AG04450 (cell line): ENCODE measurements at regions of chr4 and their contacts with region 1.

Region 1: DNA sequence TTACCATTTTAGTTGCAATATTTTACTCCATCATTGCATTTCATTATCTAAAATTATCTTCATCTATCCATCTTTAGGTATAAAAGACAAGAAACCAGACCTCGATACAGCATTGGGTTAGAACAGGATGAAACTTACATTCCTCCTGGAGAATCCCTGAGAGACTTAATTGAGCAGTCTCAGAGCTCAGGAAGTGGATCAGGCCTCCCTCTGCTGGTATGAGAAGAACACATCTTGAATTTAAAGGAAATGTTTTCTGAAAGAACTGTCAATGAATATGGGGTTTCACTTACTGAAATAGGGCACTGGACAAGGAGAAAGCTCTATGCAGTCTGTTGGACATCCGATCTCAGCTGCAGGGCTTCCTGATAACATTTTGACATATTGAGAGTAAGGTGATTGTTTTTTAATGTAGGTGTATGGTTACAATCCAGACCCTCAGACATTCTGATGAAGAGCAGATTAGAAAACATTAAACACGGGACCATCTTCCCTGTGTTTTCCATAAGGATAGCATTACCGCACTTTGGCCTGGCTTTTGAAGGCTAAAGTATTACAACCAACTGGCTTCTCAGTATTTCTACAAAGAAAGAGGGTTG is 367.2 kb downstream of the BMPR1B start:
- DNase-seq: peak; percentile 39
- H3K4me3 ChIP-seq: no peak overlapping the region
- H3K27ac ChIP-seq: no peak overlapping the region
- H3K27me3 ChIP-seq: no peaks in the 10 kb centered on the region
- CTCF ChIP-seq: peak; percentile 76

Region 2: DNA sequence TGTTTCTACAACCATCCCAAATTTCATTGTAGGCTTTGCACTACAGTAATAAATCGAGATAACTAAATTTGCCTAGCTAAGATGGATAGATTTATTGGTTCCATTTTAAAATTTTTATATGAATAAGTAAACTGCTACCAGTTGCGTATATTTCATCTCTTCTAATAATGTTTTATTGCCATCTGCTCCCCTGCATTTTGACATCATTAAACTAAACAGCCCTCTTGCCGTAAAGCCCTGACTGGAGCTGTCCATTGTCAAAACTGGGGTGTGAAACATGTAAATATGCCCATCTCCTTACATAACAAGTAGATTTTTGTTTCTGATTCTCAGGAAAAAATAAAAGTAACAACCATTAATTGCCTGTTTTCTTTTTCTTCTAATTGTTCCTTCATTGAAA is 498.1 kb before region 1 on chr4:
- CTCF ChIA-PET with region 1: interaction called, 118 read pairs
- POLR2A ChIA-PET with region 1: no interaction called
- DNase-seq: no peak
- H3K4me3 ChIP-seq: no peak overlapping the region
- H3K27ac ChIP-seq: no peak overlapping the region
- H3K27me3 ChIP-seq: no peaks in the 10 kb centered on the region
- CTCF ChIP-seq: no peak

Region 3: GRCh38 chr4:95105112-95105511 is 19.9 kb before region 1 on chr4:
- CTCF ChIA-PET with region 1: interaction called, 12 read pairs
- POLR2A ChIA-PET with region 1: no interaction called
- DNase-seq: no peak
- H3K4me3 ChIP-seq: no peak overlapping the region
- H3K27ac ChIP-seq: no peak overlapping the region
- H3K27me3 ChIP-seq: peaks cover 2% of the 10 kb centered on the region
- CTCF ChIP-seq: no peak